H1 (cell line): ENCODE measurements at regions of chr10 and their contacts with region 1.

Region 1: DNA sequence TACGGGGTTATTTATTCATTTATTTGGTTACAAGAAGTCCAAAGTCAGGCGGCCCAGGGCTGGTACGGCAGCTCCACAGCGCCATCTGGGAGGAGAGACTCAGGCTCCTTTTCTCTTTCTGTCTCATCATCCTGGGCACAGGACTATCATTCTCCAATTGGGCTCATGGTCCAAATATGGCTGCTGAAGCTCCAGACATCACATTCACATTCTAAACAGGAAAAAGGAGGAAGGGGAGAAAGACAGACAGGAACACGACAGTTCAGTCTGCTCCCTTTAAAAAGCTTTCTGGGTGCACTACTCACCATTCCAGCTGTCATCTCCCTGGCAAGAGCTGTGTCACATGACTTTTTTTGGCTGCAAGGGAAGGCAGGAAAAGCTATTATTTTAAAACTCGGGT is 74.4 kb upstream of the PDZD8 start:
- DNase-seq: peak in 1 of 2 experiments; percentile 59
- H3K4me3 ChIP-seq: no peak overlapping the region
- H3K27ac ChIP-seq: no peak overlapping the region
- H3K4me1 ChIP-seq: no peaks in the 10 kb centered on the region
- H3K27me3 ChIP-seq: no peaks in the 10 kb centered on the region
- CTCF ChIP-seq: peak; percentile 42 to 60 (median 59)
- EP300 ChIP-seq: no peak
- POLR2A ChIP-seq: no peak
- RAD21 ChIP-seq: peak; percentile 61 to 71; a peak in 3 of 4 replicates

Region 2: GRCh38 chr10:117461766-117462423 is 12.3 kb after region 1 on chr10:
- CTCF ChIA-PET with region 1: interaction called, 65 read pairs
- POLR2A ChIA-PET with region 1: interaction called, 3 read pairs
- DNase-seq: no peak
- H3K4me3 ChIP-seq: no peak overlapping the region
- H3K27ac ChIP-seq: no peak overlapping the region
- H3K4me1 ChIP-seq: peaks cover 0 to 13% (median 5%) of the 10 kb centered on the region in 4 experiments; a peak in 5 of 7 replicates
- H3K27me3 ChIP-seq: no peaks in the 10 kb centered on the region
- CTCF ChIP-seq: no peak
- EP300 ChIP-seq: no peak
- POLR2A ChIP-seq: no peak
- RAD21 ChIP-seq: no peak

Region 3: GRCh38 chr10:117471344-117471874 is 21.8 kb after region 1 on chr10:
- CTCF ChIA-PET with region 1: interaction called, 12 read pairs
- POLR2A ChIA-PET with region 1: no interaction called
- DNase-seq: no peak
- H3K4me3 ChIP-seq: no peak overlapping the region
- H3K27ac ChIP-seq: no peak overlapping the region
- H3K4me1 ChIP-seq: no peaks in the 10 kb centered on the region
- H3K27me3 ChIP-seq: no peaks in the 10 kb centered on the region
- CTCF ChIP-seq: no peak
- EP300 ChIP-seq: no peak
- POLR2A ChIP-seq: no peak
- RAD21 ChIP-seq: no peak

Region 4: GRCh38 chr10:117496616-117497028 is 47.0 kb after region 1 on chr10:
- CTCF ChIA-PET with region 1: interaction called, 10 read pairs
- POLR2A ChIA-PET with region 1: no interaction called
- DNase-seq: peak; percentile 63 to 93
- H3K4me3 ChIP-seq: no peak overlapping the region
- H3K27ac ChIP-seq: no peak overlapping the region
- H3K4me1 ChIP-seq: peaks cover 0 to 3% (median 1%) of the 10 kb centered on the region in 4 experiments; a peak in 2 of 7 replicates
- H3K27me3 ChIP-seq: peaks cover 0 to 6% (median under 1%) of the 10 kb centered on the region in 4 experiments; a peak in 2 of 7 replicates
- CTCF ChIP-seq: peak; percentile 90 to 95 (median 92)
- EP300 ChIP-seq: peak in 1 of 2 experiments; percentile 41; a peak in 1 of 3 replicates
- POLR2A ChIP-seq: no peak
- RAD21 ChIP-seq: peak; percentile 99